ENCODE measurements at regions of chr12 and their contacts with region 1.

Region 1: GRCh38 chr12:21501379-21501956 is at the starts of genes GOLT1B and RECQL:
- DNase-seq: peak; percentile 95
- H3K4me3 Mint-ChIP-seq: no peak within 1 kb of the TSS
- H3K27ac Mint-ChIP-seq: no peak within 1 kb of the TSS
- H3K4me1 Mint-ChIP-seq: peaks cover 58% of the 10 kb centered on the region
- H3K27me3 Mint-ChIP-seq: no peaks in the 10 kb centered on the region
- total RNA-seq, gene GOLT1B: 43.6 to 45.2 TPM
- total RNA-seq, gene RECQL: 112 to 114 TPM

Region 2: DNA sequence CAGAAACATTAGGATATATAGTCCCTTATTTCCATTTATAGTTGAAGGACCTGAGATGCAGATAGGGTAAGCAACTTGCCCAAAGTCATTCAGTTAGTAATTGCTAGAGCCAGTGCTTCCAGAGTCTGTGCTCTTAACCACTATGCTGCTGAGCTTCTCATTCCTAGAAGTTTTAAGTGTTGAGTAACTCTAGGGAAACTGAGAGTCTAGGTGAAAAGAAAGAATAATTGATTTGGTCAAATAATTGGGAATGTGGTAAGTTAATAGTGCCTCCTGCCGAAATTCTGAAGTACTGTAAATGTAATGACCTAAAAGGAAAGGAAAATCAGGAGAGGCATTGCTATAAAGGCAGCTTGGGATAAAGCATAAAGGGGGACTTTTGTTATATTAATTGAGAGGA is 49.9 kb before region 1 on chr12:
- CTCF ChIA-PET with region 1: no interaction called
- POLR2A ChIA-PET with region 1: interaction called, 8 read pairs
- intact Hi-C with region 1: loop called (anchors 1 kb)
- DNase-seq: no peak
- H3K4me3 Mint-ChIP-seq: no peak overlapping the region
- H3K27ac Mint-ChIP-seq: no peak overlapping the region
- H3K4me1 Mint-ChIP-seq: peaks cover 40% of the 10 kb centered on the region
- H3K27me3 Mint-ChIP-seq: no peaks in the 10 kb centered on the region

Region 3: GRCh38 chr12:21527451-21528180 is 26.1 kb after region 1 on chr12:
- CTCF ChIA-PET with region 1: no interaction called
- POLR2A ChIA-PET with region 1: no interaction called
- intact Hi-C with region 1: loop called (anchors 1 kb)
- DNase-seq: peak; percentile 78
- H3K4me3 Mint-ChIP-seq: peak overlapping the region; percentile 73
- H3K27ac Mint-ChIP-seq: no peak overlapping the region
- H3K4me1 Mint-ChIP-seq: peaks cover 6% of the 10 kb centered on the region
- H3K27me3 Mint-ChIP-seq: peaks cover 27% of the 10 kb centered on the region

Region 4: DNA sequence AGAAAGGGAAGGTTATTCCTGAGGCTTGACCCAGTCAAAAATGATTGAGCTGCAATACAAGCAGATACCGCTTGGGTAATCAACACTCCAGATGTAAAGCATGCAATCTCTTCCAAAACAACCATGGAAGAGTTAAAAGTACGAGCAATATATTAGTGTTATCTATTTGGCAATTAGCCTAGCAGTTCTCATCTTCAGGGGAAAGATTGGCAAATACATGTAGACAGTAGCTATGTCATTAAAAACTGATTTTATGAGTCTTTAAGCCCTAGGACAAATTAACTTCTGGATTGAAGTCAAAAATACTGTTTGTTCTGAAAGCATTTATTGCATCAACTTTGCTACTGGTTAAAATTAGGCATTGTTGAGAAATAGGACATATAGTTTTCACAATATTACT is 112.5 kb after region 1 on chr12:
- CTCF ChIA-PET with region 1: no interaction called
- POLR2A ChIA-PET with region 1: no interaction called
- intact Hi-C with region 1: loop called (anchors 1 kb)
- DNase-seq: no peak
- H3K4me3 Mint-ChIP-seq: no peak overlapping the region
- H3K27ac Mint-ChIP-seq: no peak overlapping the region
- H3K4me1 Mint-ChIP-seq: peaks cover 50% of the 10 kb centered on the region
- H3K27me3 Mint-ChIP-seq: no peaks in the 10 kb centered on the region

Region 5: GRCh38 chr12:21677622-21678277 is 176.3 kb after region 1 on chr12:
- CTCF ChIA-PET with region 1: interaction called, 9 read pairs
- POLR2A ChIA-PET with region 1: interaction called, 3 read pairs
- intact Hi-C with region 1: loop called (anchors 1 kb)
- DNase-seq: peak; percentile 28
- H3K4me3 Mint-ChIP-seq: peak overlapping the region; percentile 24
- H3K27ac Mint-ChIP-seq: peak overlapping the region; percentile 69
- H3K4me1 Mint-ChIP-seq: peaks cover 48% of the 10 kb centered on the region
- H3K27me3 Mint-ChIP-seq: no peaks in the 10 kb centered on the region

Region 6: GRCh38 chr12:22130671-22131070 is 629.2 kb after region 1 on chr12:
- CTCF ChIA-PET with region 1: no interaction called
- POLR2A ChIA-PET with region 1: no interaction called
- intact Hi-C with region 1: no loop called
- DNase-seq: no peak
- H3K4me3 Mint-ChIP-seq: no peak overlapping the region
- H3K27ac Mint-ChIP-seq: no peak overlapping the region
- H3K4me1 Mint-ChIP-seq: peaks cover 8% of the 10 kb centered on the region
- H3K27me3 Mint-ChIP-seq: no peaks in the 10 kb centered on the region

Region 7: GRCh38 chr12:22544038-22544979 is 1042.8 kb after region 1 on chr12 and contains the start of gene C2CD5:
- CTCF ChIA-PET with region 1: no interaction called
- POLR2A ChIA-PET with region 1: no interaction called
- intact Hi-C with region 1: loop called (anchors 1 kb)
- DNase-seq: peak; percentile 97
- H3K4me3 Mint-ChIP-seq: peak within 1 kb of the TSS; percentile 95
- H3K27ac Mint-ChIP-seq: peak within 1 kb of the TSS; percentile 93
- H3K4me1 Mint-ChIP-seq: peaks cover 31% of the 10 kb centered on the region
- H3K27me3 Mint-ChIP-seq: no peaks in the 10 kb centered on the region
- total RNA-seq, gene C2CD5: 32.6 to 32.8 TPM

Measured in activated CD4-positive, alpha-beta memory T cell treated with anti-CD3 and anti-CD28 coated beads for 36 hours (primary cell).